WTC11 (cell line): ENCODE measurements at regions of chr9 and their contacts with region 1.

Region 1: GRCh38 chr9:127396808-127397497 is at the start of gene SLC2A8:
- DNase-seq: peak; percentile 99
- ATAC-seq: peak; percentile 97
- H3K4me3 Mint-ChIP-seq: peak within 1 kb of the TSS; percentile 80
- H3K27ac Mint-ChIP-seq: peak within 1 kb of the TSS; percentile 95
- H3K4me1 Mint-ChIP-seq: peaks cover 13% of the 10 kb centered on the region
- H3K27me3 Mint-ChIP-seq: peaks cover 17% of the 10 kb centered on the region
- CTCF ChIP-seq: no peak
- total RNA-seq, gene SLC2A8: 30.2 to 37.4 TPM (median 33.9 TPM) in 3 replicates

Region 2: GRCh38 chr9:127311239-127311741 is 85.7 kb before region 1 on chr9:
- CTCF ChIA-PET with region 1: interaction called, 13 read pairs
- POLR2A ChIA-PET with region 1: no interaction called
- DNase-seq: peak; percentile 54
- ATAC-seq: peak; percentile 47; the same call in 1 of the 2 replicates
- H3K4me3 Mint-ChIP-seq: no peak overlapping the region
- H3K27ac Mint-ChIP-seq: no peak overlapping the region
- H3K4me1 Mint-ChIP-seq: peaks cover 6% of the 10 kb centered on the region
- H3K27me3 Mint-ChIP-seq: no peaks in the 10 kb centered on the region
- CTCF ChIP-seq: peak; percentile 24; the same call in 1 of the 2 replicates

Region 3: GRCh38 chr9:127360829-127361228 is 36.1 kb before region 1 on chr9:
- CTCF ChIA-PET with region 1: interaction called, 16 read pairs
- POLR2A ChIA-PET with region 1: no interaction called
- DNase-seq: peak; percentile 65
- ATAC-seq: peak; percentile 97
- H3K4me3 Mint-ChIP-seq: no peak overlapping the region
- H3K27ac Mint-ChIP-seq: no peak overlapping the region; the same call in 1 of the 2 replicates
- H3K4me1 Mint-ChIP-seq: no peaks in the 10 kb centered on the region
- H3K27me3 Mint-ChIP-seq: no peaks in the 10 kb centered on the region
- CTCF ChIP-seq: no peak

Region 4: GRCh38 chr9:127370672-127371648 is 26.0 kb before region 1 on chr9:
- CTCF ChIA-PET with region 1: interaction called, 11 read pairs
- POLR2A ChIA-PET with region 1: interaction called, 6 read pairs
- DNase-seq: no peak
- ATAC-seq: no peak
- H3K4me3 Mint-ChIP-seq: no peak overlapping the region
- H3K27ac Mint-ChIP-seq: peak overlapping the region; percentile 60
- H3K4me1 Mint-ChIP-seq: peaks cover 27% of the 10 kb centered on the region
- H3K27me3 Mint-ChIP-seq: no peaks in the 10 kb centered on the region
- CTCF ChIP-seq: no peak

Region 5: DNA sequence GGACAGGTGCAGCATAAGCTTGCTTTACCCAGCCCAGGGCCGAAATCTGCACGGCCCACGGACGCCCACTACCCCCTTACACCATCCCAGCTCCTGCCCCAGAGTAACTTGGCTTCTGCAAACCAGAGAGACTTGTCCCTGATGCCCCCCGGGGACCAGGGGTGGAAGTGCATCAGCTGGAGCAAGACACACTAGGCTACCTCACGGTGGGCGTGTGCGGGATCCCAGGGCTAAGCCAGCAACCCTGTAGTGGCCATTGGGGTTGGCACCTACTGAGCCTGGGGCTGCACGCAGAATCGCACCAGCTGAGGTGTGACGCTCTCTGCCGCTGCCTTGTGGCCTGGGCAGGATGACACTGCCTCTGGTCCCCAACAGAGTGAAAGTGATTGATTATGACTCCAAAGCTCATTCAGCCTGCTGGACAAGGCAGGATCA is 21.1 kb after region 1 on chr9:
- CTCF ChIA-PET with region 1: interaction called, 37 read pairs
- POLR2A ChIA-PET with region 1: interaction called, 3 read pairs
- DNase-seq: peak; percentile 82
- ATAC-seq: peak; percentile 95
- H3K4me3 Mint-ChIP-seq: no peak overlapping the region
- H3K27ac Mint-ChIP-seq: 0 out of 2 replicates have a peak overlapping the region, but pooled peaks have one; percentile 14
- H3K4me1 Mint-ChIP-seq: peaks cover 27% of the 10 kb centered on the region
- H3K27me3 Mint-ChIP-seq: peaks cover 3% of the 10 kb centered on the region; the same call in 1 of the 2 replicates
- CTCF ChIP-seq: no peak

Region 6: DNA sequence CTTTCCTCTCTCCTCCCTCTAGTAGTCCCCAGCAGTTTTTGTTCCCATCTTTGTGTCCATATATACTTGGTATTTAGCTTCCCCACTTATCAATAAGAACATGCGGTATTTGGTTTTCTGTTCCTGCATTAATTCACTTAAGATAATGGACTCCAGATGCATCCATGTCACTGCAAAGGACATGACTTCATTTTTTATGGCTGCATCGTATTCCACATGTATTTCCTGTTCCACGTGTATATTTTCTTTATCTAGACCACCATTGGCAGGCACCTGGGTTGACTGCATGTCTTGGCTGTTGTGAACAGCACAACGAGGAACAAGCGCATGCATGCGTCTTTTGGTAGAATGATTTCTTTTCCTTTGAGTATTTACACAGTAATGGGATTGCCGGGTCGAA is 33.5 kb after region 1 on chr9:
- CTCF ChIA-PET with region 1: no interaction called
- POLR2A ChIA-PET with region 1: no interaction called
- DNase-seq: no peak
- ATAC-seq: no peak
- H3K4me3 Mint-ChIP-seq: no peak overlapping the region
- H3K27ac Mint-ChIP-seq: no peak overlapping the region
- H3K4me1 Mint-ChIP-seq: peaks cover 2% of the 10 kb centered on the region; the same call in 1 of the 2 replicates
- H3K27me3 Mint-ChIP-seq: no peaks in the 10 kb centered on the region
- CTCF ChIP-seq: no peak